ENCODE measurements at regions of chr9 and their contacts with region 1.

Region 1: DNA sequence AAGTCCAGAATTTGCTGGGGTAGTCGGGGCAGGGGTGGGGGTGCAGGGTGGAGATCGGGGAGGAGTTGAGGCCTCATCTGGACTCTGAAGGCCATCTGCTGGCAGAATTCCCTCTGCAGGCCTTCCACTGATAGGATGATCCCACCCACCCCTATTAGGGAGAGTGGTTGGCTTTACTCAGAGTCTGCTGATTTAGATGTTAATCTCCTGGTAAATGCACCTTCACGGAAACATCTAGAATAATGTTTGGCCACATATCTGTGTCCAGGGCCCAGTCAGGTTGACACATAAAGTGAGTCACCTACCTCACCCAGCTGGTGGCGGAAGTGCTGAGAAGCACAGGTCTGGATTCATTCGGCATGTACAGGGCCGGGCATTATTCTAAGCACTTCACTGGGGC is 50.0 kb downstream of the DAPK1 start:
- DNase-seq: peak; percentile 69 to 80
- H3K4me3 ChIP-seq: no peak overlapping the region
- H3K27ac ChIP-seq: no peak overlapping the region
- H3K4me1 ChIP-seq: peaks cover 17% of the 10 kb centered on the region; the same call in 1 of the 2 replicates
- H3K27me3 ChIP-seq: no peaks in the 10 kb centered on the region
- CTCF ChIP-seq: no peak

Region 2: DNA sequence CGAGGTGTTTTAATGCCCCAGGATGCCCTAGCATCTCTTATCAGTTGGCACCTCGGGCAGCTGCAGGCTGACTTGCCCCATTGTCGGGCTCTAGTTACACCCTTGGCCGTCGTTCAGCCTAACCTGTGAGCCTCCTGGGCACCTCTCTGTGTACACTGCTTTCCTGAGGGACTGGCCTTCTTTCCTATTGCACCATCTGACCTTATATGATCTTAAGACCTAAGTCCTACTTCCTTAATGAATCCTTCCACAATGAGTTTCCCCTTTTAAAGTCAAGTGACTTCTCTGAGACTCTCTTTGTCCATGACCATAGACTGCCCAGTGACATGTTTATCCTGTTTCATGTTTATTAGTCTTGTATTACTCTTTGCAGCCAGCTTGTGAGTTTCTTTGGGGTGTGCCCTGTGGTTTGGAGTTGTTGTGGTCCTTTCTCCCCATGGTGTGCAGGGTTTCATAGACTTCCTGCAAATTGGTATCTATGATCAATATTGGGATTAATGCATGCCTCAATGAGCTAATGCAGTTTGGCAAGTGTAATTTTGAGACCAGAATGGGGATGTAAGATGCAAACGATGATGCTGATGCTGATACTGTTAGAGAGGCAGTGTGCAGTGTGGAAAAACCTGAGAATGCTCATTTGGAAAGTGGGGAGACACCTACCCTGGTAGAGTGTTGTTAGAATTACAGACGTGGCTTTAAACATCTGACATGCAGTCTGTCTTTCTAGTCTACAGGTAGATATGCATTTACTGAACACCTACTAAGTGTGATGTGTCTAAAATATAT is 45.0 kb before region 1 on chr9:
- CTCF ChIA-PET with region 1: no interaction called
- POLR2A ChIA-PET with region 1: interaction called, 9 read pairs
- intact Hi-C with region 1: loop called (anchors 1 kb)
- DNase-seq: peak; percentile 82 to 98
- H3K4me3 ChIP-seq: peak overlapping the region; percentile 29; the same call in 1 of the 2 replicates
- H3K27ac ChIP-seq: peak overlapping the region; percentile 83
- H3K4me1 ChIP-seq: peaks cover 81% of the 10 kb centered on the region
- H3K27me3 ChIP-seq: no peaks in the 10 kb centered on the region
- CTCF ChIP-seq: no peak

Region 3: GRCh38 chr9:87640385-87640795 is 92.7 kb after region 1 on chr9:
- CTCF ChIA-PET with region 1: no interaction called
- POLR2A ChIA-PET with region 1: no interaction called
- intact Hi-C with region 1: loop called (anchors 5 kb)
- DNase-seq: peak in 1 of 2 experiments; percentile 32
- H3K4me3 ChIP-seq: no peak overlapping the region
- H3K27ac ChIP-seq: no peak overlapping the region
- H3K4me1 ChIP-seq: no peaks in the 10 kb centered on the region
- H3K27me3 ChIP-seq: no peaks in the 10 kb centered on the region
- CTCF ChIP-seq: no peak

Region 4: DNA sequence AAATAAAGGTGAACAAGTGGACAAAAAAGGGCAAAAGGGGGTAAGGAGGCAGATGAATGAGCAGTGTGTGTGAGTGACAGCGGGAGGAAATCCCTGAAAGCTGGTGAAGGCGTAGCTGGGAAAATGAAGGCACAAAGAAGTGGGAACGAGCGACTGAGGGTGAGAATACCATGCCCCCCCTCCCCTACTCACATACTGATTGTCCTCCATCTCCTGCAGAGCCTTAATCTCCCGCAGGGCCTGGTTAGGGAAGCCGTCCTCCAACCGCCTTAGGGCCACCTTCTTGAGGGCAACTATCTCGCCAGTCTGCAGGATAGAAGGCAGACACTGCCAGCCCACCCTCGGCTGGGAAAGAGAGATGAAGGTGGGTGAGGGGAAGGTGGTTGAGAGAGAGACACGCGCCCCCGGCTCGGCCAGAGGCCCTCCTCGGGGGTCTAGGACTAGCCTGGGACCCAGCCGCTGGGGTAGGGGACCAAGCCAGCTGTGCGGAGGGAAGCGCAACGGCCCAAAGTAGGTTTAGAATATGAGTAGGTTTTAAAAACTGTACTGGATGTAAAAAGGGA is 426.1 kb after region 1 on chr9:
- CTCF ChIA-PET with region 1: interaction called, 13 read pairs
- POLR2A ChIA-PET with region 1: no interaction called
- intact Hi-C with region 1: no loop called
- DNase-seq: no peak
- H3K4me3 ChIP-seq: peak overlapping the region; percentile 86
- H3K27ac ChIP-seq: no peak overlapping the region
- H3K4me1 ChIP-seq: peaks cover 11% of the 10 kb centered on the region; the same call in 1 of the 2 replicates
- H3K27me3 ChIP-seq: no peaks in the 10 kb centered on the region
- CTCF ChIP-seq: no peak

Measured in PC-9 (cell line).